Naive thymus-derived CD4-positive, alpha-beta T cell (primary cell): ENCODE measurements at regions of chr5 and their contacts with region 1.

Region 1: GRCh38 chr5:17216176-17216973 is 1.1 kb upstream of the BASP1 start:
- DNase-seq: peak in 8 of 9 donors; percentile 20 to 53 (median 30)
- ATAC-seq: peak; percentile 58
- H3K4me3 ChIP-seq: no peak overlapping the region
- H3K4me3 Mint-ChIP-seq: peak overlapping the region; percentile 60 to 88 (median 78)
- H3K27ac ChIP-seq: no peak overlapping the region
- H3K27ac Mint-ChIP-seq: peak overlapping the region in 6 of 9 donors; percentile 43 to 83 (median 66)
- H3K4me1 ChIP-seq: peaks cover 0 to 7% of the 10 kb centered on the region in 2 donors
- H3K4me1 Mint-ChIP-seq: peaks cover 3 to 21% (median 19%) of the 10 kb centered on the region in 7 donors
- H3K27me3 ChIP-seq: peaks cover 0 to 3% of the 10 kb centered on the region in 2 donors
- H3K27me3 Mint-ChIP-seq: peaks cover 35 to 56% (median 45%) of the 10 kb centered on the region in 5 donors

Region 2: DNA sequence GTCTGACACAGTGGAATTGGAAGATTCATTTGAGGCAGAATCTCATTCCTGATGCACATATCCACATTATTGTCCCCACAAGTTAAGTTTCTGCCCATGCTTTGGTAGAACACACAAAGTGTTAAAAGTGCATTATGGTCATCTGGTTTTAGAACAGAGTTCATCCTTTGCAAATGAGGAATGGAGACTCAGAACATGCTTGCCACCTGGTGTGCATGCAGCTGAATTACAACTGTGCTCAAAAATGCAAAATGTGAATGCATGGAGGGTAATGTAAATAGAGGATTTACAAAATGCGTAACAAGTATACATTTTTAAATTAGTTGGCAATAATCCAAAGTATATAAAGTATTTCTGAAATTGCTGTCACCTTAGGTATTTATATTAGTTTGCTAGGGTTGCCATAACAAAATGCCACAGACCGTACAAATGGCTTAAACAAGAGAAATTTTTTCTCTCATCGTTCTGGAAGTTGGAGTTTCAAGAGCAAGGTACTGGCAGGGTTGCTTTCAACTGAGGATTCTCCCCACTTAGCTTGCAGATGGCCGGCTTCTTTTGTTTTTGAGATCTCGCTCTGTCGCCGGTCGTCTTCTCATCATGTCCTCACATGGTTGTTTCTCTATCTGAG is 1089.0 kb after region 1 on chr5:
- CTCF ChIA-PET with region 1: no interaction called
- POLR2A ChIA-PET with region 1: no interaction called
- intact Hi-C with region 1: loop called in 1 of 2 experiments (anchors 1 kb)
- DNase-seq: no peak
- ATAC-seq: no peak
- H3K4me3 ChIP-seq: no peak overlapping the region
- H3K4me3 Mint-ChIP-seq: no peak overlapping the region
- H3K27ac ChIP-seq: no peak overlapping the region
- H3K27ac Mint-ChIP-seq: no peak overlapping the region
- H3K4me1 ChIP-seq: no peaks in the 10 kb centered on the region
- H3K4me1 Mint-ChIP-seq: no peaks in the 10 kb centered on the region
- H3K27me3 ChIP-seq: no peaks in the 10 kb centered on the region
- H3K27me3 Mint-ChIP-seq: no peaks in the 10 kb centered on the region

Region 3: DNA sequence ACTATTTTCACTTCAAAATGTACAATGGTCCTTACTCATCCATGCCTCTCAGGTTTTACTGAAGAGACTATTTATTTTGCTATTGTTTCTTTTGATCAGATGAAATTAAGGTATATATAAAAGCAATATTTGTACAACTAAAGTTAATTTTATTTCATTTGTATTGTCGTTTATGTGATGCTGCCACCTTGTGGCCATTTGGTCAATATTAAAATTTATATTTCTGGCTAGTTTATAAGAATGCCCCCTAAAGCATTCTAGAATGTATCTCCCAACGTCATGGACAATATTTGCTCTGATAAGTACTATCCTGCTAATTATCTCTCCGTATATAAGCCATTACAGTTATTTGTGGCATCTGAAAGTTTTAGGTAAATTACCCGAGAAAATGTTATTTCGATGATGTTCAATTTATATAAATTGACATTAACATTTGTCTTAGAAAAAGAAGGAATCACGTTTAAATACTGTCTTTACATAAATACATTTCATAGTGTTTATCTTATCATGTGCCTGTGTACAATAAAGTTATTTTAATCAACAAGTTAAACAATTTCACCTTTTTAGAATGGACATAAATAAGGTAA is 1097.9 kb after region 1 on chr5:
- CTCF ChIA-PET with region 1: no interaction called
- POLR2A ChIA-PET with region 1: no interaction called
- intact Hi-C with region 1: loop called in 1 of 2 experiments (anchors 2 kb)
- DNase-seq: peak in 1 of 9 donors; percentile 1
- ATAC-seq: no peak
- H3K4me3 ChIP-seq: no peak overlapping the region
- H3K4me3 Mint-ChIP-seq: no peak overlapping the region
- H3K27ac ChIP-seq: no peak overlapping the region
- H3K27ac Mint-ChIP-seq: no peak overlapping the region
- H3K4me1 ChIP-seq: no peaks in the 10 kb centered on the region
- H3K4me1 Mint-ChIP-seq: peaks cover 0 to 3% (median 0%) of the 10 kb centered on the region in 7 donors
- H3K27me3 ChIP-seq: no peaks in the 10 kb centered on the region
- H3K27me3 Mint-ChIP-seq: no peaks in the 10 kb centered on the region